Activated naive CD4-positive, alpha-beta T cell treated with anti-CD3 and anti-CD28 coated beads for 36 hours (primary cell): ENCODE measurements at regions of chr12 and their contacts with region 1.

Region 1: GRCh38 chr12:62284749-62285148 is 24.5 kb downstream of the USP15 start:
- DNase-seq: no peak
- H3K4me3 Mint-ChIP-seq: no peak overlapping the region
- H3K27ac Mint-ChIP-seq: peak overlapping the region; percentile 30
- H3K4me1 Mint-ChIP-seq: peaks cover 85% of the 10 kb centered on the region
- H3K27me3 Mint-ChIP-seq: no peaks in the 10 kb centered on the region

Region 2: GRCh38 chr12:62301799-62302133 is 17.0 kb after region 1 on chr12:
- CTCF ChIA-PET with region 1: no interaction called
- intact Hi-C with region 1: loop called (anchors 2 kb)
- DNase-seq: no peak
- H3K4me3 Mint-ChIP-seq: no peak overlapping the region
- H3K27ac Mint-ChIP-seq: no peak overlapping the region
- H3K4me1 Mint-ChIP-seq: peaks cover 54% of the 10 kb centered on the region
- H3K27me3 Mint-ChIP-seq: no peaks in the 10 kb centered on the region

Region 3: DNA sequence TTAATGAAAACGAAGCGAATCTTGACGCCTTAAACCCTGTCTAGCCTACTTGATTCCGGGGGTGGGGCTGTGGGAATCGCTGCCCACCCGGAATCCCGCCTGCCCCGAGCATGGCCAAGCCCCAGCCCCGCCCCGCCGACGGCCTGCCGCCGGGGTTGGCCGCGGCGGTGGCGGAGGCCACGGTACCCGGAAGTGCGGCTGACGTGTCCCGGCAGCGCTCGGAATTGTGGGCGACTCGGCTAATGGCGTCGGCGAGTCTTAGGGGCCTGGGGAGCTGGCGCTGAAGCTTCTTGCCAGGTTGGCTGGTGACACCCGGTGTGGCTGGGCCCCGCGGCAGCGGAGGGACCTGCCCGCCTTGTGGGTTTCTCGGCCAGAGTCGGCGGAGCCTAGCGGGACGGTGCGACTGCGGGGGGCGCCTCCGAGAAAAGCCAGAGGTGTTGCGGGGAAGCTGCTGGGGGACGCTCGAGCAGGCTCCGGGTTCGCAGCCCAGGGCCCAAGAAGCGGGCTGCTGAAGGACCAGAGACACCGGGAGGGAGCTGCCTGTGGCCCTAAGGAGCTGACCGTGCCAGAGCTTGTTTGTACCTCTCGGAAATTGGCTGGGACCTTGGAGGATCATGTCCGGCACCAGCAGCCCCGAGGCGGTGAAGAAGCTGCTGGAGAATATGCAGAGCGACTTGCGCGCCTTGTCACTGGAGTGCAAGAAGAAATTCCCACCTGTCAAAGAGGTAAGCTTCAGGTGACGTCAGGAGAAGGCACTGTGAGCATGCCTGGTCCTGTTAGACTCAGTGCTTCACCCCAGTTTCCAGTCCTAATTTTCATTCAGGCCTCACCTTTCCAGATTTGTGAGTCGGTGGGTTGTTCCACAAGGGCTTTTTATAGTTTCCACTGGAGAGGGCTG is 182.1 kb after region 1 on chr12 and contains the start of gene MON2:
- CTCF ChIA-PET with region 1: no interaction called
- intact Hi-C with region 1: no loop called
- DNase-seq: peak; percentile 87
- H3K4me3 Mint-ChIP-seq: peak within 1 kb of the TSS; percentile 74
- H3K27ac Mint-ChIP-seq: peak within 1 kb of the TSS; percentile 88
- H3K4me1 Mint-ChIP-seq: peaks cover 15% of the 10 kb centered on the region
- H3K27me3 Mint-ChIP-seq: no peaks in the 10 kb centered on the region
- total RNA-seq, gene MON2: 29.2 to 29.8 TPM